Endothelial cell of umbilical vein (primary cell): ENCODE measurements at regions of chr14 and their contacts with region 1.

Region 1: DNA sequence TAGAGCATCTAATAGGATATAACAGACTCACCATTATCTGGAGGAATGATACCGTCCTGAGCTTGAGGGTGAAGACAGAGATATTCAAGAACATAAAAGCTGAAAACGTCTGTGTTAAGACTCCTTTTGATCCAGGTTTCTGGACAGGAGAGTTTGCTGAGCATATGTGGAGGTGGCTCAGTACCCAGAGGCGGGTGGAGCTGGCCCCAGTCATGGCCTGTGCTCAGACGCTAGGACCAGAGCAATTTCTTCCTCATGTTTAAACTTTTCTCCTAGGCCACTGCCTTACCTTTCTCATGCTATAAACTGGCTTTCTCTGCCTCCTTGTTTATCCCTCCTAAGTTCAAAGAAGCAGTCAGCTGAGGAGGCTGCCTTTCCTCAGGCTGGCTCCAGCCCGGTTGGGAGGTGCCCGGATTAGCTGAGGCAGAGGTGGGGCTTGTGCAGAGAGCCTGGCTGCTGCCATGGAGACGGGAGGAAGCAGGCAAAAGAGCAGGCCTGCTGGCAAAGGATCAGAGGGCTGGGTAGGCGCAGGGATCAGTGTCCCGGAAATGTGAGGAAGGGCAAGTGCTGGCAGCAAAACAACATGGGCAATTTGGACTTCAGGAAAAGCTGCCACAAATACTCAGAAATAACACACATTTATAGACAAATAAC is 13.7 kb downstream of the COA8 start:
- DNase-seq: peak; percentile 95
- H3K4me3 ChIP-seq: no peak overlapping the region
- H3K27ac ChIP-seq: peak overlapping the region; percentile 42
- H3K4me1 ChIP-seq: peaks cover 15% of the 10 kb centered on the region
- H3K27me3 ChIP-seq: no peaks in the 10 kb centered on the region
- CTCF ChIP-seq: no peak
- POLR2A ChIP-seq: peak; percentile 6

Region 2: DNA sequence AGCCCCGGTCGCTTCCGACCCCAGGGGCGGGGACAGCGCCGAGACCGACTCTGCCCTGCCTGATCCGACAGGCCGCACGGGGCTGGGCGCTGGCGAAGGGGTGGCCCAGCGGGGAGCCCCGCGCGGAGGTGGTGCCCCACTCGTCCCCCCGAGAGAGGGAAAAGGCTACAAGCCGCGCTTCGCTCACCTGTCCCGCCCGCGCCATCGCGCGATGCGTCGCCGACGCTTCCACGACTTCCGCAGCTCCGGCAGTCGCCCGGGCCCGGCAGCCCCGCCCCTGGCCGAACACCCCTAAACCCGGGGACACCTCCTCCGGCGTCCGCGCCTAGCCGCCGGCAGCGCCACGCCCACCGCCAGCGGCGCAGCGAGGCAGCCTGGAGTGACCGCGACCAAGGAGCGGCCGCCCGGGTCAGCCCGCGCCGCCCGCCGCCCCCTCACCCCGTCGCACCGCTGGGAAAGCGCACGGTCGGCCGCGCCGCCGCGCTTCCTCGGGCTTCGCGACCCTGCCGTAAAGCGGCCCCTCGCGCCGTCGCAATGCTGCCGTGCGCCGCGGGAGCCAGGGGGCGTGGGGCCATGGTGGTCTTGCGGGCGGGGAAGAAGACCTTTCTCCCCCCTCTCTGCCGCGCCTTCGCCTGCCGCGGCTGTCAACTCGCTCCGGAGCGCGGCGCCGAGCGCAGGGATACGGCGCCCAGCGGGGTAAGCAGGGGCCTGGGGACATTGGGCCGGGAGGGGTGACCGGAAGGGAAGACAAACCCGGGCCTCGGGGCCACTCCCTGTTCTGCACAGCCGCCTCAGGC is 13.9 kb before region 1 on chr14 and contains the starts of genes BAG5 and COA8:
- CTCF ChIA-PET with region 1: interaction called, 4 read pairs
- POLR2A ChIA-PET with region 1: no interaction called
- dilution Hi-C with region 1: no loop called
- intact Hi-C with region 1: loop called (anchors 1 kb)
- DNase-seq: peak; percentile 86
- H3K4me3 ChIP-seq: peak within 1 kb of the TSS; percentile 61 to 97 (median 95)
- H3K27ac ChIP-seq: peak within 1 kb of the TSS; percentile 94
- H3K4me1 ChIP-seq: peaks cover 23% of the 10 kb centered on the region
- H3K27me3 ChIP-seq: no peaks in the 10 kb centered on the region
- CTCF ChIP-seq: no peak
- POLR2A ChIP-seq: peak; percentile 36
- total RNA-seq, gene BAG5: 28.4 and 32.5 TPM in 2 replicates
- total RNA-seq, gene COA8: 46.4 and 52.6 TPM in 2 replicates

Region 3: DNA sequence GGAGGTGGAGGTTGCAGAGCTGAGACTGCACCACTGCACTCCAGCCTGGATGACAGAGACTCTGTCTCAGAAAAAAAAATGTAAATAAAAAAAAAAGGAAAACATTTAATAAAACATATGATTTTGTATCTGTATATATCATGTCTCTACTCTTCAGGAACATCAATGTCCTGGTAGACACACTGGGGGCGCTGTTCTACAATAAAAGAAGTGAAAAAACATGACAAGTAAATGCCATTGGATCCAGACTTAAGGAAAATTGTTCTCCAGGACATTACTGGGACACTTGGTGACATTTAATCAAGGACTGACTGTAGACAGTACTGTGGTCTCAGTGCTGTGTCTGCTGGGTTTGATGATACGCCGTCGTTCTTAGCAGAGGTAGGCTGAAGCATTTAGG is 37.0 kb after region 1 on chr14:
- CTCF ChIA-PET with region 1: interaction called, 10 read pairs
- POLR2A ChIA-PET with region 1: no interaction called
- dilution Hi-C with region 1: no loop called
- intact Hi-C with region 1: no loop called
- DNase-seq: no peak
- H3K4me3 ChIP-seq: no peak overlapping the region
- H3K27ac ChIP-seq: no peak overlapping the region
- H3K4me1 ChIP-seq: no peaks in the 10 kb centered on the region
- H3K27me3 ChIP-seq: peaks cover 0 to 2% of the 10 kb centered on the region in 2 experiments
- CTCF ChIP-seq: no peak
- POLR2A ChIP-seq: no peak

Region 4: DNA sequence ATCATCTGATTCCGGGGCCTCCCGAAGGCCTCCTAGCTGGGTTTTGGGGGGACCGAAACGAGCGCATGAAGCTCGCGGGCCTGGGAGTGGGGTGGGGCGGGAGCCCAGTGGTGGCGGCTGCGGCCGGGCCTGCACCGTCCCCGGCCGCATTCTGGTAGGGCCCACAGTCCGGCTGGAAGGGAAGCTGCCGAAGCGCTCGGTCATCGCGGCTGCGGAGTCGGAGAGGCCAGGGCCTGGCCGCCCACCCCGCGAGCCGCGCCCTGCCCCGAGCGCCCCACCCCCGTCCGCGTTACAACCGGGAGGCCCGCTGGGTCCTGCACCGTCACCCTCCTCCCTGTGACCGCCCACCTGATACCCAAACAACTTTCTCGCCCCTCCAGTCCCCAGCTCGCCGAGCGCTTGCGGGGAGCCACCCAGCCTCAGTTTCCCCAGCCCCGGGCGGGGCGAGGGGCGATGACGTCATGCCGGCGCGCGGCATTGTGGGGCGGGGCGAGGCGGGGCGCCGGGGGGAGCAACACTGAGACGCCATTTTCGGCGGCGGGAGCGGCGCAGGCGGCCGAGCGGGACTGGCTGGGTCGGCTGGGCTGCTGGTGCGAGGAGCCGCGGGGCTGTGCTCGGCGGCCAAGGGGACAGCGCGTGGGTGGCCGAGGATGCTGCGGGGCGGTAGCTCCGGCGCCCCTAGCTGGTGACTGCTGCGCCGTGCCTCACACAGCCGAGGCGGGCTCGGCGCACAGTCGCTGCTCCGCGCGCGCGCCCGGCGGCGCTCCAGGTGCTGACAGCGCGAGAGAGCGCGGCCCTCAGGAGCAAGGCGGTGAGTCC is 52.4 kb after region 1 on chr14 and contains the start of gene KLC1:
- CTCF ChIA-PET with region 1: interaction called, 6 read pairs
- POLR2A ChIA-PET with region 1: no interaction called
- dilution Hi-C with region 1: no loop called
- intact Hi-C with region 1: loop called (anchors 2 kb)
- DNase-seq: peak; percentile 69
- H3K4me3 ChIP-seq: peak within 1 kb of the TSS; percentile 73 to 97 (median 96)
- H3K27ac ChIP-seq: peak within 1 kb of the TSS; percentile 61
- H3K4me1 ChIP-seq: peaks cover 23% of the 10 kb centered on the region
- H3K27me3 ChIP-seq: no peaks in the 10 kb centered on the region
- CTCF ChIP-seq: no peak
- POLR2A ChIP-seq: peak; percentile 92
- total RNA-seq, gene KLC1: 233 and 240 TPM in 2 replicates

Region 5: DNA sequence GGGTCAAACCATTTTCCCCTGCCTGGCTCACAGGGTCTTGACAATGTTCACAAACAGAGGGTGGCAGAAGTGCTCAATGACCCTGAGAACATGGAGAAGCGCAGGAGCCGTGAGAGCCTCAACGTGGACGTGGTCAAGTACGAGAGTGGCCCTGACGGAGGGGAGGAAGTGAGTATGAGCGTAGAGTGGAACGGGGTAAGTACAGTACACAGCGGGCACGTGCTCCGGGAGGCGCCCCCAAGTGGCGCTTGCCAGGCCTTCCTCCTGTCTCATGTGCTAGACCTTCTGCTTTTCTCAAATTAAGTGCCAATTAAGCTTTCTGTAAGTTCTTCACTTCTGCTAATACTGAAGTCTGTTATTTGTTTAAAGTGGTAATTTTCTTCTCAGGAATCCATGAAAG is 102.9 kb after region 1 on chr14:
- CTCF ChIA-PET with region 1: interaction called, 17 read pairs
- POLR2A ChIA-PET with region 1: no interaction called
- dilution Hi-C with region 1: no loop called
- intact Hi-C with region 1: loop called (anchors 1 kb)
- DNase-seq: peak; percentile 66
- H3K4me3 ChIP-seq: no peak overlapping the region
- H3K27ac ChIP-seq: no peak overlapping the region
- H3K4me1 ChIP-seq: no peaks in the 10 kb centered on the region
- H3K27me3 ChIP-seq: no peaks in the 10 kb centered on the region
- CTCF ChIP-seq: peak; percentile 62 to 83
- POLR2A ChIP-seq: no peak

Region 6: GRCh38 chr14:103910262-103910935 is 333.9 kb after region 1 on chr14:
- CTCF ChIA-PET with region 1: interaction called, 4 read pairs
- POLR2A ChIA-PET with region 1: no interaction called
- dilution Hi-C with region 1: no loop called
- intact Hi-C with region 1: loop called (anchors 2 kb)
- DNase-seq: peak; percentile 75
- H3K4me3 ChIP-seq: no peak overlapping the region
- H3K27ac ChIP-seq: no peak overlapping the region
- H3K4me1 ChIP-seq: peaks cover 4% of the 10 kb centered on the region
- H3K27me3 ChIP-seq: no peaks in the 10 kb centered on the region
- CTCF ChIP-seq: peak; percentile 85
- POLR2A ChIP-seq: no peak